ENCODE measurements at regions of chr11 and their contacts with region 1.

Region 1: DNA sequence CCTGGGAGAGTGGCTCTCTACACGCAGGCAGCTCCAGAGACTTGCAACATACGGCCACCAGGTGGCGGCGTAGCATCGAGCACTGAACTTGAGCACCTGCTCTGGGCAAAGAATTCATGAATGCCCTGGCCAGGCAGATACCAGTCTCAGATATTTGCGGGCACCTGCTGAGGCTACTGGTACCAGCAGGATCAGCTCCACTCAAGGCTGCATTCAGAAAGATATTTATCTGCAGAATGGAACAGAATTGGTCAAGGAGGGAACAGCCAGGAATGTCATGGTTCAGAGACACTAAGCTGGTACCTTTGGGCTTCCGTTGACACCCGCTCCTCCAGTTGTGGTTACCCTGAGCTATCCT is 10.8 kb upstream of the CCDC86 start:
- DNase-seq: peak; percentile 83
- H3K4me3 Mint-ChIP-seq: peak overlapping the region; percentile 35
- H3K27ac Mint-ChIP-seq: no peak overlapping the region
- H3K4me1 Mint-ChIP-seq: peaks cover 21% of the 10 kb centered on the region
- H3K27me3 Mint-ChIP-seq: peaks cover 8% of the 10 kb centered on the region
- CTCF ChIP-seq: peak; percentile 92

Region 2: GRCh38 chr11:60349990-60350389 is 481.1 kb before region 1 on chr11:
- CTCF ChIA-PET with region 1: no interaction called
- POLR2A ChIA-PET with region 1: no interaction called
- intact Hi-C with region 1: no loop called
- DNase-seq: no peak
- H3K4me3 Mint-ChIP-seq: no peak overlapping the region
- H3K27ac Mint-ChIP-seq: no peak overlapping the region
- H3K4me1 Mint-ChIP-seq: no peaks in the 10 kb centered on the region
- H3K27me3 Mint-ChIP-seq: peaks cover 38% of the 10 kb centered on the region
- CTCF ChIP-seq: no peak

Region 3: GRCh38 chr11:60813324-60813723 is 17.8 kb before region 1 on chr11:
- CTCF ChIA-PET with region 1: interaction called, 26 read pairs
- POLR2A ChIA-PET with region 1: no interaction called
- intact Hi-C with region 1: no loop called
- DNase-seq: no peak
- H3K4me3 Mint-ChIP-seq: no peak overlapping the region
- H3K27ac Mint-ChIP-seq: no peak overlapping the region
- H3K4me1 Mint-ChIP-seq: no peaks in the 10 kb centered on the region
- H3K27me3 Mint-ChIP-seq: peaks cover 9% of the 10 kb centered on the region
- CTCF ChIP-seq: no peak

Region 4: DNA sequence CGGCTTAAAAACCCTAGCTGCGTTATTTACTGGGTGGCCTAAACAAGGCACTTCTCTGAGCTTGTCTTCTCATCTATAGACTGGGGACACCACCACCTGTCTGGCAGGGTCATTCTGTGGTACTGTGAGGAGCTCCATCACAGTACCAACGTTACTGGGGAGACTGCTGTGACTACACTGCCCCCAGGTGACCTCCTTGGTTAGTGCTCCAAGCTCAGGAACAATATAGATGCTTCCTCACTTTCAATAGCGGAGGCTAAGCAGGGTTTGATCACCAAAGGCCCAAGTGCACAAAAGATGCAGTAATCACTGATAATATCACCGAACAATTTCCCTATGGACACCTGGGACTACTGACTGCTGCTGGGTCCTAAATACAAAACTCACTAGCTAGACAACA is 56.4 kb after region 1 on chr11:
- CTCF ChIA-PET with region 1: interaction called, 47 read pairs
- POLR2A ChIA-PET with region 1: interaction called, 11 read pairs
- intact Hi-C with region 1: loop called (anchors 1 kb)
- DNase-seq: peak; percentile 55
- H3K4me3 Mint-ChIP-seq: no peak overlapping the region
- H3K27ac Mint-ChIP-seq: no peak overlapping the region
- H3K4me1 Mint-ChIP-seq: no peaks in the 10 kb centered on the region
- H3K27me3 Mint-ChIP-seq: no peaks in the 10 kb centered on the region
- CTCF ChIP-seq: peak; percentile 49

Region 5: DNA sequence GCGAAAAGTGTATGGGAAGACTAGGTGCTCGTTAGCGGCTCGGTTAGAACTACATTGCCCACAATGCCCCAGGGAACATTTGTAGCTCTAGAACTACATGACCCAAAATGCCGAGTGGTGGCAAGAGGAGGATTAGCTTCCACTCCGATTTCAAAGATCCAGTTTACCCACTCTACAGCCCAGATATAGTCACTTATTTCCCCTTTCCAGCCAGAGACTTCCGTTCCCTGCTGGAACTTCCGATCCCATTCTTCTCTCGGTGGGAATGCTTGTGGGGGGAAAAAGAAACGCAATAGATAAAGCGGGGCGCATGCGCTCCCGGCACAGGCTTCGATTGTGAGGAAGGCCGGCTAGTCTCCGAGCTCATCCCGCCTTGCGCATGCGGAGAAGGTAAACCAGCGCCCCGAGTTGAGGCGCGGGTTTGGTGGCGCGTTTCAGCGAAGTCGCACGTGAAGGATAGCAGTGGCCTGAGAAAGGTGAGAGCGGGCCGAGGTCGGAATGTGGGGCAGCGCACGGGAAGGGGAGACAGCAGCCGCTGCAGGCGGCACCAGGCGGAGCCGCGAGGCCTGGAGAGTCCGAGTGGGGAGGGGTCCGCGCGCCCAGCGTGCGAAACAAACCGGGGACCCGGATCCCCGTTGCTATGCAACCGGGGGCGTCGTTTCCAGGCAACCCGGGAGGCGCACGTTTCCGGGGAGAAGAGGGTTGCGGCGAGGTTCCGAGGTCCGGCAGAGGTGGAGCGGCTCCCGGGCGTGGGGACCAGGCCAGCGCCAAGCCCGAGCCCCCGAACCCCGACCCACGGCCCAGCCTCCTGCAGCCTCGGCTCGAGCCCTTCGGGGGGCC is 82.9 kb after region 1 on chr11 and contains the start of gene TMEM109:
- CTCF ChIA-PET with region 1: interaction called, 13 read pairs
- POLR2A ChIA-PET with region 1: interaction called, 7 read pairs
- intact Hi-C with region 1: no loop called
- DNase-seq: peak; percentile 90
- H3K4me3 Mint-ChIP-seq: peak within 1 kb of the TSS; percentile 97
- H3K27ac Mint-ChIP-seq: peak within 1 kb of the TSS; percentile 95
- H3K4me1 Mint-ChIP-seq: peaks cover 23% of the 10 kb centered on the region
- H3K27me3 Mint-ChIP-seq: peaks cover 6% of the 10 kb centered on the region
- CTCF ChIP-seq: no peak
- total RNA-seq, gene TMEM109: 39.5 and 45.8 TPM in 2 replicates

Region 6: GRCh38 chr11:60985991-60986915 is 155.1 kb after region 1 on chr11:
- CTCF ChIA-PET with region 1: no interaction called
- POLR2A ChIA-PET with region 1: no interaction called
- intact Hi-C with region 1: no loop called
- DNase-seq: peak; percentile 59
- H3K4me3 Mint-ChIP-seq: no peak overlapping the region
- H3K27ac Mint-ChIP-seq: peak overlapping the region; percentile 43
- H3K4me1 Mint-ChIP-seq: peaks cover 11% of the 10 kb centered on the region
- H3K27me3 Mint-ChIP-seq: no peaks in the 10 kb centered on the region
- CTCF ChIP-seq: no peak

Region 7: DNA sequence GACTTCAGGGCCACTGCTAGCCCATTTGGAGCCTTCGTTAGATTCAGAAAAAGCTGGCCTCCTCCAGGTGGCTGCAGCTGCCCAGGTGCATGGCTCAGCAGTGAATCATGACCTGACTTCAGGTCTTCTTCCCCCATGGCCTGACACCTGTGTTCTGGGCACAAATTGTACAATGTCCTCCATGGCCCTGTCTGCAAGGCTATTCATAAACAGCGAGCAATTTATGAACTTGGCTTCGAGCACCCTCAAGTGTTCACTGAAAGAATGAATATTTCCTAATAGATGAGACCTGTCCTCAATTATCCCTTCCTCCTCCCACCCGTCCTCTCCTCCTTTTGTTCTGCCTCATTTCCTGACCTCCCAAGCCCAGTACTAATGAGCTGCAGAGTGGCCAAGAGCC is 342.3 kb after region 1 on chr11:
- CTCF ChIA-PET with region 1: interaction called, 27 read pairs
- POLR2A ChIA-PET with region 1: no interaction called
- intact Hi-C with region 1: loop called (anchors 1 kb)
- DNase-seq: peak; percentile 48
- H3K4me3 Mint-ChIP-seq: no peak overlapping the region
- H3K27ac Mint-ChIP-seq: no peak overlapping the region
- H3K4me1 Mint-ChIP-seq: peaks cover 9% of the 10 kb centered on the region
- H3K27me3 Mint-ChIP-seq: peaks cover 56% of the 10 kb centered on the region
- CTCF ChIP-seq: peak; percentile 27

Region 8: GRCh38 chr11:61460474-61460881 is 629.4 kb after region 1 on chr11:
- CTCF ChIA-PET with region 1: no interaction called
- POLR2A ChIA-PET with region 1: no interaction called
- intact Hi-C with region 1: no loop called
- DNase-seq: no peak
- H3K4me3 Mint-ChIP-seq: no peak overlapping the region
- H3K27ac Mint-ChIP-seq: no peak overlapping the region
- H3K4me1 Mint-ChIP-seq: no peaks in the 10 kb centered on the region
- H3K27me3 Mint-ChIP-seq: no peaks in the 10 kb centered on the region
- CTCF ChIP-seq: no peak

Region 9: DNA sequence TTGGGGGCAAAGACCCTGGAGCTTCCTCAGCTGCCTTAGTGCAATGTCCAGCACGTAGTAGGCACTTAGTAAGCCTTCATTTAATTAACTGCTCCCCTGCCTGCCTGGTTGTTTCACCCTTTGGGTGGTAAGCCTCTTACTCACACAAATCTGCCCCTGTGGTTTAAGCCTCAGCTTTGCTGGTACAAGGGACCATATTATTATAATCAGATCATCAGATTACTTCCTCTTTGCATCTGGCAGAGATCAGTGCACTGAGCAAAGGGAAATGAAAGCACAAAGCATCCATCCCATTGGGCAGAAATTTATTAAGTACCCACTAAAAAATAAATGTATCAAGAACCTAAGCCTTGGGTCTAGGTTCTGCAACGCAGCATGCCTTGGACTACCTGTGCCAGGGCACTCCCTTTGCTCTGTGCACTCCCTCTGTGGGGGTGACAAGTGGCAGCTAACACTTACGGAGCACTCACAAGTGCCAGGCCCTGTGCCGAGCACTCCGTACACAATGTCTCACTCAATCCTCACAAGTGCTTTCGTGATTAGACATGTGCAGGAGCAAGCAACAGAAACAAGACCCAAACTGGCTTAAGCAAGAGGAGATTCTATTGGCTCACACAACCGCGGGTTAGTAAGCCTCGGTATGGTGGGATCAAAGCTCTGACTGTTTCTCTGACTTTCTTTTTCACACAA is 814.2 kb after region 1 on chr11:
- CTCF ChIA-PET with region 1: no interaction called
- POLR2A ChIA-PET with region 1: no interaction called
- intact Hi-C with region 1: no loop called
- DNase-seq: no peak
- H3K4me3 Mint-ChIP-seq: no peak overlapping the region
- H3K27ac Mint-ChIP-seq: no peak overlapping the region
- H3K4me1 Mint-ChIP-seq: no peaks in the 10 kb centered on the region
- H3K27me3 Mint-ChIP-seq: peaks cover 27% of the 10 kb centered on the region
- CTCF ChIP-seq: no peak